HEK293T (cell line): ENCODE measurements at regions of chr20 and their contacts with region 1.

Region 1: DNA sequence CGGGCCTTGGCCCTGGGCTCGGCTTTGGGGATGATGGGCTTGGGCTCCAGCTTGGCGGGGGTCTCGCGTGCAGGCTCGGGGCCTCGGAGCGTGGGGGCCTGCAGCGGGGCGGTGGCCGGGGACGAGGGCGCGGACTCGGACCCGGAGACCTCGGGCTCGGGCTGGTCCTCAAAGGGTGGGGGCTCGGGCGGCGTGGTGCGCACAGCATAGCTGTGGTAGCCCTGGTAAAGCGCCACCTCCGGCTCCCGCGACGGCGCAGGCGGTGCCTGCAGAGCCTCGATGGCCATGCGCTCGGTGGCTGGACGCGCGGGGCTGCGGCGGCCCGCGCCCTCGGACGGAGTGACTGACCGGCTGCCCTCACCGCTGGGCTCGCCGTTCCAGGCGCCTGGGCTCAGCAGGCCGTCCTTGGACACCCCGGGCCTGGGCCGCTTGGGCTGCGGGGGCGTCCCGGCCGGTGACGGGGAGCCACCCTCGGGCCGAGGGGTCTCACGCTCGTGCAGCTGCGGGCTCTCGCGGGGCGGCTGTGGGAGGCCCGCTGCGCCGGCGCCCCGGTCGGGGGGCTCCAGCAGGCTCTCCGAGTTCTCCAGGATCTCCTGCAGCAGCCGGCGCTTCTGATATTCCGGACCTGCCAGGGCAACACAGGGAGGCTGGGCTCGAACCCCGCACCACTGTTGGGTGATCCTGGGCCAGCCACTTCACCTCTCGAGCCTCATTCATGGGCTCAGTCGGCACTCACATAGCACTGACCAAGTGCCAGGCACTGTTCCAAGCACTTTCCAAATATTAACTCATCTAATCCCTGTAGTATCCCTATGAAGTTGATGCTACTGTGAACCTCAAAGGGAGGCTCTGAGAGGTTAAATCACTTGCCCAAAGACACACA is 71.0 kb downstream of the JPH2 start:
- DNase-seq: no peak

Region 2: DNA sequence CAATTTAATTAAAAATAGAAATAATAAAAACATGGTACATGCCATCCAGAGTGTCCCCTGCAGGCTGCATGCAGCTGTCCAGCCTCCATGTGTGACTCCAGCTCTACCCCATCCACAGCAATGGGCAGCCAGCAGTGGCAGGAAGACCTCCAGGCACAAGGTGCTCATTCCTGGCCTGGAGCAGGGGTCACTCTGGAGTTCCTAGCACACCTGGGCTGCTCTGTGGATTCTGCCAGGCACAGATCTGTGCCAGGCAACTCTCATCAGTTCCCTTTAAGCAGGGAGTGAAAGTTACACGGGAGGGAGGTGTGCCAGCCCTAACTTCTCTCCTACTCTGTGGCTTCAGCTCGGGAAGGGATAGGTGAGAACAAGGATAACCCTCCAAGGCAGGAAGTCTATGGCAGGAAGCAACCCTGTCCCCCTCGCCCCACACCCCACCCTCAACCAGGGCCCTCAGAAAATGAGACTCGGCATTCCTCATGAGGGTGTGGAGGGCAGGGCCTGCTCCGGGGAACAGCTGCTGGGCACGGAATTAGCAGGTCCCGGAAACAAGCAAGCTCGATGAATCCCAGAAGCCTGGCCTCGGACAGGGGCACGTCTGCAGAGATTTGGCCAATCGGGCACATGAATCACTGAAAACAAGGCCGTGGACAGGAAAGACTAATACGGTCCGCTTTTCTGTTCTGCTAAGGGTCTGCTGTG is 61.0 kb after region 1 on chr20:
- CTCF ChIA-PET with region 1: no interaction called
- POLR2A ChIA-PET with region 1: no interaction called
- DNase-seq: no peak

Region 3: GRCh38 chr20:44196271-44196670 is 80.3 kb after region 1 on chr20:
- CTCF ChIA-PET with region 1: interaction called, 44 read pairs
- POLR2A ChIA-PET with region 1: interaction called, 4 read pairs
- DNase-seq: no peak

Region 4: DNA sequence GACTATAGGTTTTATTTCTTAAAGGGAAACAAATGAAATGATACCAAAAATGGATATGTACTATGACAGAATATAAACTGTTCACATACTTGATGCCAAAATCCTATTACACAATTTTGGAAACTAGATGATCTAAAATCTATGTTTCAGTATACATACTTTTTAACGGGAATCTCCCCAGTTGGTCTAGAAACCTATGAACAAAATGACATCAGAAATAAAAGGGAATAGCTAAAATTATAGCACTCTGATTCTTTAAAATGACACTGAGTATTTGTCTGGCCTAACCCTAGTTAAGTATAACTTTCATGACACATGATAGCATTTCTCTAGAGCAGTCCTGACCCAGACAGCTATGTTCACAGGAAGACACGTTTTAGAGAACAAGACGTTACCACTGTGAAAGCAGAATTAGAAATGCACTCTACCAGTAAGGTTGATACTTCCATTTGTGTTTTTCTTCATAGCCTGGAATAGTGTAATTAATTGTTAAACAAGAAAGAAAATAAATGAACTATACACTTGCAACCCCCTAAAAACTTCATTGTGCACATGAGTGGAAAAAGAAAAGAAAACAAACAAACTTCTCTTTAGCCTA is 91.2 kb after region 1 on chr20:
- CTCF ChIA-PET with region 1: no interaction called
- POLR2A ChIA-PET with region 1: no interaction called
- DNase-seq: no peak